HEK293 (cell line): ENCODE measurements at regions of chr22 and their contacts with region 1.

Region 1: GRCh38 chr22:31272522-31273446 is 19.5 kb downstream of the PIK3IP1 start:
- H3K4me3 ChIP-seq: no peak overlapping the region
- H3K27ac ChIP-seq: no peak overlapping the region
- H3K4me1 ChIP-seq: no peaks in the 10 kb centered on the region
- CTCF ChIP-seq: no peak

Region 2: GRCh38 chr22:30471616-30472318 is 801.0 kb before region 1 on chr22 and contains the start of gene SEC14L3:
- CTCF ChIA-PET with region 1: no interaction called
- POLR2A ChIA-PET with region 1: no interaction called
- H3K4me3 ChIP-seq: no peak within 1 kb of the TSS
- H3K27ac ChIP-seq: no peak within 1 kb of the TSS
- H3K4me1 ChIP-seq: no peaks in the 10 kb centered on the region
- CTCF ChIP-seq: no peak

Region 3: DNA sequence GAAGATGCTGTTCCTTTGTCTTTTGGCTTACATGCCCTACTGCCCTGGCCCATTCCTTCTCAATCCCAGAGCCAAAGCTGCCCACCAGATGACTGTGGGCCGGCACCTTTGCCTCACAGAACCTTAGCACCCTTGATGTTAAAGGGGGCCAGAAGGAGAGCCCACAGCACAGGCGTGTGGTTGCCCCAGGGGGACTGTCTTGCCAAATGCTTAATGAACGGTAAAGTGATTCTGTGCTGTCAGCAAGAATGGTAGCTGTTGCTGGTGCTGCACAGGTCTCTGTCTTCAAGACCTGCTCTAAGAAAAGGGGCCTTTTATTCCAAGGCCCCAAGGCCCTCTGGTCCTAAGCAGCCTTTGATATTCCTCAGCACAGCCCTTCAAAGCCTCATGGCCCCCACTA is 417.5 kb before region 1 on chr22:
- CTCF ChIA-PET with region 1: no interaction called
- POLR2A ChIA-PET with region 1: no interaction called
- H3K4me3 ChIP-seq: no peak overlapping the region
- H3K27ac ChIP-seq: no peak overlapping the region
- H3K4me1 ChIP-seq: no peaks in the 10 kb centered on the region
- CTCF ChIP-seq: no peak

Region 4: GRCh38 chr22:31107178-31107893 is 165.4 kb before region 1 on chr22 and contains the start of gene SELENOM:
- CTCF ChIA-PET with region 1: interaction called, 20 read pairs
- POLR2A ChIA-PET with region 1: interaction called, 3 read pairs
- H3K4me3 ChIP-seq: peak within 1 kb of the TSS; percentile 39
- H3K27ac ChIP-seq: peak within 1 kb of the TSS; percentile 40; the same call in 1 of the 2 replicates
- H3K4me1 ChIP-seq: peaks cover 4% of the 10 kb centered on the region; the same call in 1 of the 2 replicates
- CTCF ChIP-seq: peak; percentile 95

Region 5: GRCh38 chr22:31211862-31212730 is 60.7 kb before region 1 on chr22 and contains the start of gene LIMK2:
- CTCF ChIA-PET with region 1: interaction called, 117 read pairs
- POLR2A ChIA-PET with region 1: interaction called, 9 read pairs
- H3K4me3 ChIP-seq: peak within 1 kb of the TSS; percentile 92
- H3K27ac ChIP-seq: peak within 1 kb of the TSS; percentile 65; the same call in 1 of the 2 replicates
- H3K4me1 ChIP-seq: 0 out of 2 replicates have a peak, but pooled peaks cover 4% of the 10 kb centered on the region
- CTCF ChIP-seq: peak; percentile 91

Region 6: GRCh38 chr22:31230871-31231621 is 41.7 kb before region 1 on chr22:
- CTCF ChIA-PET with region 1: interaction called, 17 read pairs
- POLR2A ChIA-PET with region 1: no interaction called
- H3K4me3 ChIP-seq: no peak overlapping the region
- H3K27ac ChIP-seq: no peak overlapping the region
- H3K4me1 ChIP-seq: no peaks in the 10 kb centered on the region
- CTCF ChIP-seq: peak; percentile 86

Region 7: DNA sequence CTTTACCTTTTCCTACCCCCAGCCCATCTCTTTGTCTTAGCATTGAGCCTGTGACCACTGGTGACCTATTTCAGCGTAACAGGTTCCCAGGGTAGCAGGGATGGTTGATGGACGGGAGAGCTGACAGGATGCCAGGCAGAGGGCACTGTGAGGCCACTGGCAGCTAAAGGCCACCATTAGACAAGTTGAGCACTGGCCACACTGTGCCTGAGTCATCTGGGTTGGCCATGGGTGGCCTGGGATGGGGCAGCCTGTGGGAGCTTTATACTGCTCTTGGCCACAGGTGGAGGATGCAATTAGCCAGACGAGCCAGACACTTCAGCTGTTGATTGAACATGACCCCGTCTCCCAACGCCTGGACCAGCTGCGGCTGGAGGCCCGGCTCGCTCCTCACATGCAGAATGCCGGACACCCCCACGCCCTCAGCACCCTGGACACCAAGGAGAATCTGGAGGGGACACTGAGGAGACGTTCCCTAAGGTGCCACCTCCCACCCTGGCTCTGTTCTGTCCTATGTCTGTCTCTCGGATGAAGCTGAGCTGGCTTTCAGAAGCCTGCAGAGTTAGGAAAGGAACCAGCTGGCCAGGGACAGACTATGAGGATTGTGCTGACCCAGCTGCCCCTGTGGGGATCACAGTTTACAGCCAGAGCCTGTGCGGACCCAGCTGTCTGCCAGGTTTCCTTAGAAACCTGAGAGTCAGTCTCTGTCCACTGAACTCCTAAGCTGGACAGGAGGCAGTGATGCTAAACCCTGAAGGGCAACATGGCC is 10.3 kb before region 1 on chr22:
- CTCF ChIA-PET with region 1: interaction called, 29 read pairs
- POLR2A ChIA-PET with region 1: no interaction called
- H3K4me3 ChIP-seq: no peak overlapping the region
- H3K27ac ChIP-seq: no peak overlapping the region
- H3K4me1 ChIP-seq: no peaks in the 10 kb centered on the region
- CTCF ChIP-seq: no peak

Region 8: DNA sequence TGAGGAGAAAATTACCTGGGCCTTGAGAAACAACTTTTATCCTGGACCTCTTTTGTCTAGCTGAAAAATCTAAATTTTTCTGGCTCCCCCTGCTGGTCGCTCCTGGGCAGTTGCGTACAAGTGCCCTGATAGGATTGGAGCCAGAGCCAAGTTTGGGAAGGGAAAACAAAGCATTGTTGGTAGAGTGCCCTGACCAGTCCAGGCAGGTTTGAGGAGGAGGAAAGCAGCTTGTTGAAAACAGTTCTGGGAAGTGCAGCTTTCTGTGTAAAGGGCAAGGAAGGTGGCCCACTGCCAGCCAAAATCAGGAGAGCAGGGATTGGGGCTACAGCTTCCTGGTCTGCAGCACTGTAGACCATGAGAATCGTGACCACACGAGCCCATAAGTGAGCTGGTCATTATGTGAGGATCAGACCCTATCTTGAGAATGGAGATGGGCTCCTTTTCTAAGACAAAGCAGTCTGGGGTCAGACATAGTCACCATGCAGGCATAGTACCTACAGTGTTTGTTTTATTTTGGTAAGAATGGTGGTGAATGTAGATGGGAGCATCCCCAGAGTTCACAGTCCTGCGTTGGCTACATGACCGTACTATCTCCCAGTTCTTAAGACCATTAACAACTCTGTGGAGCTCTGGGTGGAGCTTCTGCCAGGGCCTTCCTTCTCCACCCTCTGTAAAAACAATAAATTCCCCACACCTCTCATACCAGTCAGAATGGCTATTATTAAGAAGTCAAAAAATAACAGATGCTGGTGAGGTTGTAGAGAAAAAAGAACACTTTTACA is 40.8 kb after region 1 on chr22:
- CTCF ChIA-PET with region 1: interaction called, 17 read pairs
- POLR2A ChIA-PET with region 1: no interaction called
- H3K4me3 ChIP-seq: no peak overlapping the region
- H3K27ac ChIP-seq: no peak overlapping the region
- H3K4me1 ChIP-seq: no peaks in the 10 kb centered on the region
- CTCF ChIP-seq: peak; percentile 31; the same call in 1 of the 2 replicates

Region 9: DNA sequence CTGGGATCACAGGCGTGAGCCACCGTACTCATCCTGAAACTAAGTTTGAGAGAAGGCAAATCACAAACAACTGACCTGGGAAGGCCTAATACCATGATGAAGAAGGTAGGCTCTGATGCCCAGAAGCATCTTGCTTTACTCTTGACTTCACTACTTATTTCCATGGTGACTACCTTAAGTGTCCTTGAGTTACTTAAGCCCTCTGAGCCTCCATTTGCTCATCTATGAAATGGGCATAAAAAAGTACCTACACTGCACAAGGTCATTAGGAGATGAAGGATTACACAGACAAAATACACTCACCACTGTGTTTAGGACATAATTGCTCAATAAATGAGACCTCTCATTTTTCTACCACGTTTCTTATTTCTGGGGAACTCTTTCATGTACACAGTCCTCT is 188.9 kb after region 1 on chr22:
- CTCF ChIA-PET with region 1: no interaction called
- POLR2A ChIA-PET with region 1: no interaction called
- H3K4me3 ChIP-seq: no peak overlapping the region
- H3K27ac ChIP-seq: no peak overlapping the region
- H3K4me1 ChIP-seq: no peaks in the 10 kb centered on the region
- CTCF ChIP-seq: no peak